K562 (cell line): ENCODE measurements at regions of chr22 and their contacts with region 1.

Region 1: DNA sequence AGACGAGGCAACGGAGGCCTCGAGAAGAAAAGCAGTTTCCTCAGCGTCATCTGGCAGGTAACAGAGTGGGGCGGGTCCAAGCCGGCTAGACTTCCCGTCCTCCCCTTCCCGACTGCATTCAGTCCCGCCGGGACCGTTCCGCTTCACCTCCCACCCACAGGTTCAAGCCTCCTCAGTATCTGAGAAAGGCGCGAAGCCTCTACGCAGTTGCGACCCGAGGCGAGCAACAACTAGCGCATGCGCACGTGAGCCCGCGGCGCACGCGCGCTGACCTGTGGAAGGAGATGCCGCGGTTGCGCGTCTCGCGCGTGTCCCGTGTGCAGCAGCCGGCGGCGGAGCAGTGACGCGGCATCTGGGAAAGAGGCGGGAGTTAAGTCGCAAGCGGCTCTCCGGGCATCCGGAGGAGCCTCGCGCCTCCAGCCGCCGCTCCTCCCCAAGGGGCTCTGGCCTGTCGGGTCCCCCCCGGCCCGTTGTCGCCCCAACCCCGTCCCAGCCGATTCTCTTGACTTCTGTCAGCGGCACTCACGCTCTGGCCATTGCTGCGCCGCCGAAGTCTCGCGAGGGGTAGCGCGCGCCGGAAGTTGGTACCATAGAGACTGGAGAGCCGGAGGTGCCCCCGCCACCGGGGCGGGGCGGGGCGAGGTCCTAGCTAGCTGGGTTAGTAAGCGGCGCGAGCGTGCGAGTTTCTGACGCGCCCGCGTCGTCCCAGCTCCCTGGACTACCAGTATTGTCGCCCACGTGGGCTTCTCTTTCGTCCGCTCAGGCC is at the start of gene THAP7:
- DNase-seq: peak; percentile 100
- ATAC-seq: peak; percentile 91
- H3K4me3 ChIP-seq: peak within 1 kb of the TSS; percentile 58
- H3K27ac ChIP-seq: peak within 1 kb of the TSS; percentile 87
- H3K4me1 ChIP-seq: peaks cover 25 to 76% of the 10 kb centered on the region in 2 experiments
- H3K27me3 ChIP-seq: no peaks in the 10 kb centered on the region
- CTCF ChIP-seq: peak in 2 of 3 experiments; percentile 8 to 17; a peak in 2 of 6 replicates
- EP300 ChIP-seq: peak; percentile 60
- POLR2A ChIP-seq: no peak
- RAD21 ChIP-seq: peak; percentile 39 to 44; a peak in 2 of 4 replicates
- polyA plus RNA-seq, gene THAP7: 7.9 to 33.1 TPM

Region 2: DNA sequence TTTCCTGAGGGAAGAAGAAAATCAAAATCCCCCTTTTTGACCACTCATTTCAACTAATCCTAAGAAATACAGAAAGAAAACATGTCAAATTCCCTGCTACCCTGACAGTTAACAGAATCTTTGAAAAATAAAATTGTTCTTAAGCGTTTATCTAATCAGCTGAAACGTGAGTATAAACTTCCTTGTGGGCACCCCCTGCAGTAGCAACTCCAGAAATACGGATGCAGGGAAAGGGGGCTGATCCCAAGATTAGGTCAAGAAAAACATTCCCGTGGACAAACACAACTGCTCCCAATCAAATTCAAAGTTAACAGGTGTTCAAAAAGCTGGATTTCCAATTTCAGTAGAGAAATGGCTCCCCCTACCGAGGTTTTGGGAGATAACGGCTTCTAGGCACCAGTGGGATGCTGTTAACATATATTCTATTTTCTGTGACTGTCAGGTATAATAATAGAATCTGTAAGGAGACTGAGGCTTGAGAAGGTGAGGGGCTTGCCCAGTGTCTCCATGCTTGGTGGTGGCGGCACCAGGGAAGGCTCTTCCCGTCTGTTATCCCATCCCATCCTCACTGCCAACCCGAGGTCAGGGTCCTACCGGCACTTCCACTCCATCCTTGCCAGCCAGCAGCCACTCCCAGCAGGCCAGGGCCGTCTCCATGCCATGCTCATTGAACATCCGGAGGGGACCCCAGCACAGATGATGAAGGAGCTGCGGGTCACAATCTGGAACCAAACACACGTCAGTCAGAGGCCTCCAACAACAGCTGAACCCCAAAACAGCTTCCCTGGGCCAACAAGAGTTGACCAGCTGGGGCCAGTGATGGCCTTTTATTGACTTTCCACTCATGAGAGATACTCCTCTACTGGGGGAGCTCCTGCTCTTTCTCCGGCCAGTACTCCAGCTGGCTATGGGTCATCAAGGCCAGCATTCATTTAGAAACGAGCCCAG is 259.8 kb before region 1 on chr22:
- CTCF ChIA-PET with region 1: no interaction called
- POLR2A ChIA-PET with region 1: no interaction called
- in situ Hi-C with region 1: no loop called
- intact Hi-C with region 1: no loop called
- DNase-seq: peak; percentile 87 to 93 (median 90)
- ATAC-seq: peak; percentile 78
- H3K4me3 ChIP-seq: no peak overlapping the region
- H3K27ac ChIP-seq: no peak overlapping the region
- H3K4me1 ChIP-seq: no peaks in the 10 kb centered on the region
- H3K27me3 ChIP-seq: no peaks in the 10 kb centered on the region
- CTCF ChIP-seq: peak; percentile 94 to 100 (median 99)
- EP300 ChIP-seq: no peak
- POLR2A ChIP-seq: no peak
- RAD21 ChIP-seq: peak; percentile 54 to 86

Region 3: GRCh38 chr22:20761536-20761935 is 240.2 kb before region 1 on chr22:
- CTCF ChIA-PET with region 1: no interaction called
- POLR2A ChIA-PET with region 1: no interaction called
- in situ Hi-C with region 1: no loop called
- intact Hi-C with region 1: no loop called
- DNase-seq: no peak
- ATAC-seq: no peak
- H3K4me3 ChIP-seq: no peak overlapping the region
- H3K27ac ChIP-seq: no peak overlapping the region
- H3K4me1 ChIP-seq: no peaks in the 10 kb centered on the region
- H3K27me3 ChIP-seq: no peaks in the 10 kb centered on the region
- CTCF ChIP-seq: no peak
- EP300 ChIP-seq: no peak
- POLR2A ChIP-seq: no peak
- RAD21 ChIP-seq: no peak

Region 4: GRCh38 chr22:20858615-20859416 is 142.9 kb before region 1 on chr22 and contains the starts of genes PI4KA and SNAP29:
- CTCF ChIA-PET with region 1: no interaction called
- POLR2A ChIA-PET with region 1: interaction called, 5 read pairs
- in situ Hi-C with region 1: no loop called
- intact Hi-C with region 1: loop called (anchors 5 kb)
- DNase-seq: peak; percentile 100
- ATAC-seq: peak; percentile 92
- H3K4me3 ChIP-seq: peak within 1 kb of the TSS; percentile 57
- H3K27ac ChIP-seq: peak within 1 kb of the TSS; percentile 79
- H3K4me1 ChIP-seq: peaks cover 53 to 78% of the 10 kb centered on the region in 2 experiments
- H3K27me3 ChIP-seq: no peaks in the 10 kb centered on the region
- CTCF ChIP-seq: peak in 1 of 3 experiments; percentile 42; a peak in 2 of 6 replicates
- EP300 ChIP-seq: peak; percentile 84
- POLR2A ChIP-seq: no peak
- RAD21 ChIP-seq: no peak
- polyA plus RNA-seq, gene PI4KA: 7.3 to 11.1 TPM
- polyA plus RNA-seq, gene SNAP29: 19.5 to 22.8 TPM

Region 5: GRCh38 chr22:20957316-20958101 is 44.2 kb before region 1 on chr22:
- CTCF ChIA-PET with region 1: no interaction called
- POLR2A ChIA-PET with region 1: interaction called, 24 read pairs
- in situ Hi-C with region 1: no loop called
- intact Hi-C with region 1: loop called (anchors 1 kb)
- DNase-seq: no peak
- ATAC-seq: 0 out of 3 replicates have a peak, but pooled peaks have one; percentile 3
- H3K4me3 ChIP-seq: no peak overlapping the region
- H3K27ac ChIP-seq: no peak overlapping the region
- H3K4me1 ChIP-seq: peaks cover 0 to 25% of the 10 kb centered on the region in 2 experiments; a peak in 2 of 5 replicates
- H3K27me3 ChIP-seq: peaks cover 0 to 2% of the 10 kb centered on the region in 2 experiments; a peak in 1 of 5 replicates
- CTCF ChIP-seq: no peak
- EP300 ChIP-seq: no peak
- POLR2A ChIP-seq: no peak
- RAD21 ChIP-seq: no peak

Region 6: DNA sequence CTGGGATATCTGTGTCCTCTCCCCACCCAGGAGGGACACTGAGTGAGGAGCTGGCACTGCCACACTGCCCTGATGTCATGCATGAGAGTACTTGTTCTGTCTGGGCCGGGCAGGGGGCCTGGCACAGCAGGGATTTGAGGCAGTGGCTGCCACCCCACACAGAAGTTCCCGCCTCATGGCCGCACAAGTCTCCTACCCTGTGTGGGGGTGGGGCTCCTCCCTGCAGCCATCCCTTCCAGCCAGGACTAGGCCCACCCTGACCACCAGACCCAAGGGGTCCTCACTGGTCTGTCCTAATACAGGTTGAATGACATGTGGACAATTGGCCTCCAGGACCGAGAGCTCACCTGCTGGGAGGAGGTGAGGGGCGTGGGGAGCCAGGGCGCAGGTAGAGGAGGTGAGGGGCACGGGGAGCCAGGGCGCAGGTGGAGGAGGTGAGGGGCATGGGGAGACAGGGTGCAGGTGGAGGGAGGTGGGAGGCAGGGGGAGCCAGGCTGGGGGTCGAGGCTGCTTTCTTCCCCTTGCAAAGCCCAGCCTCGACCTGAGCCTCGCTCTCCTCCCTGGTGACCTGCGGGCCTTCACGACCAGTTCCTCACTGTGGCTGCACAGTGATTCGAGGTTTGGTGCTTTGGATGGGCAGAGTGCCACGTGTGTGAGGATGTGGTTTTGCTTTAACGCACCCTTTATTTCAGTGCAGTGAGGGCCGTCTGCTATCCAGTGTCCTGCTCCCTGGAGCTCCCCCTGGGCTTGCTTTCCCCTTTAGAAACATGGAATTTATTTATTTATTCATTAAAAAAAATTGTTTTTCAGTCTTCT is 12.2 kb before region 1 on chr22:
- CTCF ChIA-PET with region 1: no interaction called
- POLR2A ChIA-PET with region 1: interaction called, 127 read pairs
- in situ Hi-C with region 1: no loop called
- intact Hi-C with region 1: no loop called
- DNase-seq: no peak
- ATAC-seq: no peak
- H3K4me3 ChIP-seq: no peak overlapping the region
- H3K27ac ChIP-seq: no peak overlapping the region
- H3K4me1 ChIP-seq: peaks cover 0 to 53% of the 10 kb centered on the region in 2 experiments; a peak in 2 of 5 replicates
- H3K27me3 ChIP-seq: no peaks in the 10 kb centered on the region
- CTCF ChIP-seq: no peak
- EP300 ChIP-seq: no peak
- POLR2A ChIP-seq: no peak
- RAD21 ChIP-seq: no peak

Region 7: GRCh38 chr22:21026783-21027611 is 25.3 kb after region 1 on chr22:
- CTCF ChIA-PET with region 1: no interaction called
- POLR2A ChIA-PET with region 1: interaction called, 333 read pairs
- in situ Hi-C with region 1: no loop called
- intact Hi-C with region 1: loop called (anchors 1 kb)
- DNase-seq: peak in 1 of 4 experiments; percentile 64
- ATAC-seq: no peak
- H3K4me3 ChIP-seq: no peak overlapping the region
- H3K27ac ChIP-seq: no peak overlapping the region
- H3K4me1 ChIP-seq: peaks cover 0 to 61% of the 10 kb centered on the region in 2 experiments; a peak in 3 of 5 replicates
- H3K27me3 ChIP-seq: peaks cover 45 to 70% of the 10 kb centered on the region in 2 experiments; a peak in 4 of 5 replicates
- CTCF ChIP-seq: no peak
- EP300 ChIP-seq: no peak
- POLR2A ChIP-seq: no peak
- RAD21 ChIP-seq: no peak

Region 8: GRCh38 chr22:21055587-21056319 is 54.0 kb after region 1 on chr22:
- CTCF ChIA-PET with region 1: no interaction called
- POLR2A ChIA-PET with region 1: interaction called, 7 read pairs
- in situ Hi-C with region 1: no loop called
- intact Hi-C with region 1: loop called (anchors 5 kb)
- DNase-seq: peak; percentile 84 to 97 (median 92)
- ATAC-seq: peak; percentile 73
- H3K4me3 ChIP-seq: no peak overlapping the region
- H3K27ac ChIP-seq: no peak overlapping the region
- H3K4me1 ChIP-seq: peaks cover 26 to 40% of the 10 kb centered on the region in 2 experiments
- H3K27me3 ChIP-seq: peaks cover 20 to 64% of the 10 kb centered on the region in 2 experiments; a peak in 4 of 5 replicates
- CTCF ChIP-seq: no peak; a peak in 1 of 6 replicates
- EP300 ChIP-seq: no peak
- POLR2A ChIP-seq: no peak
- RAD21 ChIP-seq: no peak